Left cardiac atrium (tissue), 4 donors: ENCODE measurements at regions of chr3 and their contacts with region 1.

Region 1: GRCh38 chr3:184417619-184418327 is 37.9 kb downstream of the CHRD start:
- DNase-seq: peak; percentile 72
- ATAC-seq: peak; percentile 89 to 92

Region 2: GRCh38 chr3:184513276-184514170 is 95.8 kb after region 1 on chr3:
- intact Hi-C with region 1: loop called in 1 of 2 experiments (anchors 10 kb)
- DNase-seq: peak; percentile 88
- ATAC-seq: peak; percentile 99

Region 3: DNA sequence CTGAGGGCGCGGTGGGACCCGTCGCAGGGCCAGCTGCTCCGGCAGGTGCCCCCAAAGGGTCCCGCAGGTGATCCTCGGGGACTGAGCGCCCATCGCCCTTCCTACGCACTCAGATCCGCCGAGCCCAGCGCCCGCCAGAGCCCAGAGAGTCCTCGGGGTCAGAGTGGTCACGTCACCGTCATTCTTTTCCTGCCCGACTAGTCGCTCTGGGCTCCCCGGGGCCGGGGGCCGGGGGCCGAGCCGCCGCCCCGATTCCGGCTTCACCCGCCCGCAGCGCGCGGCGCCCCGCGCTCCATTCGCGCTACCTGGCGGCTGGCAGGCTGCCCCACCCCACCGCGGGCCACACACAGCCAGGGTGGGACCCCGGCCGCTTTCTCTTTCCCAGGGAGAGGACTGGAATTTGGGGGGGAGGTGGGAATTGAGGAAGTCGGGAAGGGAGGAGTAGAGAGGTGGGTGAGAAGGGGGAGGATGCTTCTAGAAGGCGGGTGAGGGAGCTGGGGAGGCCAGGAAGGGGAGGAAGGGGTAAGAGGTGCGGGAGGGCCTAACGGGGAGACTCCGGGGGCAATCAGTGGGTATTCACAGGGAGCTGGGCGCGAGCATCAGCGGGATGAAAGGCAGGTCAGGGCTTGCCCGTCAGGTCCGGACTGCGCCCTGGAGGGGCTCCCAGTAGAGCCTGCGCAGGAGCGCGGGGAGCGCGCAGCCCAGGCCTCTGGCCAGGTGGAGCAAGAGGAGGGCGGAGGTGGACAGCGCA is 107.7 kb after region 1 on chr3:
- intact Hi-C with region 1: no loop called
- DNase-seq: peak; percentile 29
- ATAC-seq: peak; percentile 67 to 76

Region 4: DNA sequence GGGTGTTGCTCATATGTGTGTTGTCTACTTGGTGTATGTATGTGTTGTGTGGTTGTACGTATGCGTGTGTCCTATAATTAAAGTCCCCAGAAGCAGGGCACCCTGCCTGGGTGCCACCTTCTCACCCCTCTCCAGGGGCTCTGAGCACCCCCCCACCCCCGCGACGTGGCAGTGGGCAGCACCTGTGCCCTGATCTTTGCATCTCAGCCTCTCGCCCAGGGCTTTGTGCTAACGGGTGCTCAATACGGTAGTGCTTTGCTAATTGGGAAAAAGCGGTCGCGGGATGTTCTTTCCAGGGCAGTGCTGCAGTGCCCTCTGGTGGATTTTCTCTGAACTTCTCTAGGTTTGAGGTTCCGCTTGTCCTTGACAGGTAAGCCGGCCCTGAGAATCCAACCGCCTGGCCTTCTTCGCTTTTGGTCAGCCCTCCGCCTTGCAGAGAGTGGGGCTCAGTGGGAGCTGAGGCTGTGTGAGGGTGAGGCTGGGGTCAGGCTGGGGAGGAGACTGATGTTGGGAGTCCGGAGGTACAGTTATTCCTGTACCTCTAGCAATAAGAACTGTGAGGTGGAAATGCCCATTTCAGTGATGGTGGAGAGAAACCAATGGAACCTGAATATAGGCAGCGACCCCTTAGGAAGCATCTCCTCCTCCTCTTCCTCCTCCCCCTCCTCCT is 126.2 kb after region 1 on chr3:
- intact Hi-C with region 1: loop called in 1 of 2 experiments (anchors 2 kb)
- DNase-seq: peak; percentile 64
- ATAC-seq: peak; percentile 68 to 88

Region 5: DNA sequence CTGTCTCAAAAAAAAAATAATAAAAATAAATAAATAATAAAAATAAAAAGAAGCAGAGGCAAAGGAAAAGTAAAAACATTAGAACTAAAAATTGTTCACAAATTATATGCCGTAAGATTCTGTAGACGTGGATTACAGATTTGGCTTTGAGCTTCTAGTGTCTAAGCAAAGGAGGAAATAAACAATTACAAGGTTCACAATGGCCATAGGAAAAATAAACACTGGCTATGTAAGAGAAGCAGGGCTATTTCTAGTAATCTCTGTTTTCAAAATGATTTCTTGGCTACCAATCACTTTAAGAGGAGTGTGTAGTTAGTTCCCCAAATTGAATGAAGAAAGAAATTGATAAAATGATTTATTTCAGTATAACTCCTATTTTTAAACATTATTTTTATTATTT is 1026.6 kb after region 1 on chr3:
- intact Hi-C with region 1: no loop called
- DNase-seq: no peak
- ATAC-seq: no peak